Caco-2 (cell line): ENCODE measurements at regions of chr16 and their contacts with region 1.

Region 1: DNA sequence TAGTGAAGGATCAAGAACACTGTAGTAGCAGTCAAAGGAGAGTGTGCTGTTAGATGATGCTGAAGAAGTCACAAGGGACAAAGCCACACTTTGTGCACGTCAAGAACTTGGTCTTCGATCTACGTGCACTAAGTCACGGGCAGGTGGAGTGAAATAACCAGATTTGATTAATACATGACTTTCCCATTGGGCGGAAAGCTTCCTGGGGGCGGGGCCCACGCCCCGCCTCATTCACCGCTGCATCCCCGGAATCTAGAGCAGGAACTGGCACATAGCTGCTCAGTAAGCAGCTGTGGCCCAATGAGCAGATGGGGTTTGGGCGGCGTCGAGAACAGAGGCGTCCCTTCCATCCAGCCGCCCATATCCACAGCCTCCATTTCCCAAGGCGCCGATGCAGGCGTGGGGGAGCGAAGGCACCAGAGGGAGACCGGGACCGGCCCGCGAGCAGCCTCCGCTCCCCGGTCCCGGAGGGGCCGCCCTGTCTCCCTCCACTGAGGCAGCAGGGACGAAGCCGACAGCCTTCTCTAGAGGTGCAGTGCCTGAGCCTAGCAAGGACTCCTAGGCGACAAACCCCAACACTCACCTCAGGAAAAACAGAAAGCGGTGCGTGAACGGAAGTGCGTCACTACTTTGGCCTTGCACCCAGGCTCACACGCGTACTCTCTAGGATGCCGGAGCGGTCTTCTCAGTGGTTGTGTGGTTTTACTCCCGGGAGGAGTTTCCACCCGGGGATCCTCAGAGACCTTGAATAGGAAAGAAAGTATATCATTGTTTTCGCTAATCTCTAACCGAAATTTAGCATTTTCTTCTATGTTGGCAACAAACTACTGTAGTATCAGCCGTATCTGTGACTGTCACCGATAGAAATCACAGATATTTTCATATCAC is 4.9 kb downstream of the ZNF19 start:
- DNase-seq: peak; percentile 78 to 85
- H3K4me3 ChIP-seq: peak overlapping the region; percentile 65
- H3K4me3 Mint-ChIP-seq: peak overlapping the region; percentile 76
- H3K27ac Mint-ChIP-seq: peak overlapping the region; percentile 36
- H3K4me1 ChIP-seq: no peaks in the 10 kb centered on the region
- H3K4me1 Mint-ChIP-seq: no peaks in the 10 kb centered on the region
- H3K27me3 ChIP-seq: no peaks in the 10 kb centered on the region
- H3K27me3 Mint-ChIP-seq: no peaks in the 10 kb centered on the region
- CTCF ChIP-seq: no peak

Region 2: GRCh38 chr16:71461686-71462648 is 22.3 kb before region 1 on chr16 and contains the start of gene ZNF23:
- CTCF ChIA-PET with region 1: interaction called, 4 read pairs
- POLR2A ChIA-PET with region 1: interaction called, 7 read pairs
- intact Hi-C with region 1: loop called (anchors 1 kb)
- DNase-seq: peak; percentile 80 to 89
- H3K4me3 ChIP-seq: peak within 1 kb of the TSS; percentile 97
- H3K4me3 Mint-ChIP-seq: peak within 1 kb of the TSS; percentile 78
- H3K27ac Mint-ChIP-seq: peak within 1 kb of the TSS; percentile 86
- H3K4me1 ChIP-seq: peaks cover 7% of the 10 kb centered on the region; the same call in 1 of the 2 replicates
- H3K4me1 Mint-ChIP-seq: no peaks in the 10 kb centered on the region
- H3K27me3 ChIP-seq: no peaks in the 10 kb centered on the region
- H3K27me3 Mint-ChIP-seq: no peaks in the 10 kb centered on the region
- CTCF ChIP-seq: no peak
- total RNA-seq, gene ZNF23: 8.5 and 9.6 TPM in 2 replicates

Region 3: GRCh38 chr16:71467810-71468209 is 16.4 kb before region 1 on chr16:
- CTCF ChIA-PET with region 1: interaction called, 3 read pairs
- POLR2A ChIA-PET with region 1: interaction called, 8 read pairs
- intact Hi-C with region 1: loop called (anchors 1 kb)
- DNase-seq: peak; percentile 50 to 62
- H3K4me3 ChIP-seq: no peak overlapping the region
- H3K4me3 Mint-ChIP-seq: no peak overlapping the region
- H3K27ac Mint-ChIP-seq: no peak overlapping the region
- H3K4me1 ChIP-seq: no peaks in the 10 kb centered on the region
- H3K4me1 Mint-ChIP-seq: no peaks in the 10 kb centered on the region
- H3K27me3 ChIP-seq: no peaks in the 10 kb centered on the region
- H3K27me3 Mint-ChIP-seq: no peaks in the 10 kb centered on the region
- CTCF ChIP-seq: no peak

Region 4: DNA sequence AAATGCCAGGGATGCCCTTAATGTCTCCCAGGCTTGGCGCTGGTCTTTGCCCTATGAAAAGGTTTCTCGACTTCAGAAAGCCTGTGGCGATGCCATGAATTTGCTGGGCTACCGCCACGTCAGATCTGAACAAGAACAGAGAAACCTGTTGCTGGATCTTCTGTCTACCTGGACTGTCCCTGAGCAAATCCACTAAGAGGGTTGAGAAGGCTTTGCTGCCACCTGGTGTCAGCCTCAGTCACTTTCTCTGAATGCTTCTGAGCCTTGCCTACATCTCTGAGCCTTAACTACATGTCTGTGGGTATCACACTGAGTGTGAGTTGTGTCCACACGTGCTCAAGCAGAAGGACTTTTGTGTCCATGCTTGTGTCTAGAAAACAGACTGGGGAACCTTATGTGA is 53.4 kb after region 1 on chr16:
- CTCF ChIA-PET with region 1: no interaction called
- POLR2A ChIA-PET with region 1: no interaction called
- intact Hi-C with region 1: loop called (anchors 5 kb)
- DNase-seq: peak; percentile 62 to 71
- H3K4me3 ChIP-seq: no peak overlapping the region
- H3K4me3 Mint-ChIP-seq: no peak overlapping the region
- H3K27ac Mint-ChIP-seq: no peak overlapping the region
- H3K4me1 ChIP-seq: no peaks in the 10 kb centered on the region
- H3K4me1 Mint-ChIP-seq: no peaks in the 10 kb centered on the region
- H3K27me3 ChIP-seq: no peaks in the 10 kb centered on the region
- H3K27me3 Mint-ChIP-seq: peaks cover 14% of the 10 kb centered on the region
- CTCF ChIP-seq: peak; percentile 53 to 88